ENCODE measurements at regions of chr17 and their contacts with region 1.

Region 1: GRCh38 chr17:19520641-19521040 is 13.0 kb upstream of the SLC47A1 start:
- DNase-seq: no peak
- H3K4me3 ChIP-seq: no peak overlapping the region
- H3K27ac ChIP-seq: no peak overlapping the region
- H3K4me1 ChIP-seq: no peaks in the 10 kb centered on the region
- H3K27me3 ChIP-seq: no peaks in the 10 kb centered on the region
- CTCF ChIP-seq: no peak

Region 2: DNA sequence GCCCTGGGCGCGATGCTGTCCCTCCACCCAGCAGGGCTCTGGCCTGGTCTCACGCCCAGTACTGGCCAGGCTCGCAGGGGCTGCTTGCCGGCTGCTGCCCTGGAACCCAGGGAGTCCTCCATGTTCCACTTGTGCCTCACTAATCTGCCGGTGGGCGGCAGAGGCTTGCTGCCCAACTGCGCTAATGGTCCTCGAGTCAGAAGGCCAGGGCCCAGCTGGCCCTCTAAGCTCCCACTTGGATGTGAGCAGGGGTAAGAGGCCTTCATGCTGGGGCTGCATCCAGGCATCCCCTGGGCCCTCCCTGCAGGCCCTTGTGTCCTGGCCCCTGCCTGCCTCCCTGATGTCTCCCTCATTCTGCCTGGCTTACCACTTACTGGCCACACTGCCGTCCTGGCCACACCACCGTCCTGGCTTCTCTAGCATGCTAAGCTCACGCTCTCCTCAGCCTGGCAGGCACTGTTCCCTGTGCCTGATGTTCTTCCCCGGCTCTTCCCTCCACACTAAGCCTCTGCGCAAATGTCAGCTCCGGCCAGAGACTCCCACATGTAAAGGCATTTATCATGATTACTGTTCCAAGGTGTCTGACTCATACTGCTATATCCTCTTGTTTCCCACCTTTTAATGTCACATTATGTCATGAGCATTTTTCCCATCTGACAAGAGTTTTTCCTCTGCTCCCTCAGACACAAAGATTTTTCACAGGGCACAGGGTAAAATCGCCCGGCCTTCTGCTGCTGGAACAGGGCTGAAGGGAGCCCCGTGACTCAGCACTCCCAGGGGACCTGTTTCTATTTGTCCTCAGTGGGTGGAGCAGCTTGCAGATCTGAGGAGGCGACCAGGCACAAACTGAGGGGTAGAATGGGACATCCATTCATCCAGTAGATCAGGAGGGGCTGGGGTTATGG is 174.0 kb before region 1 on chr17:
- CTCF ChIA-PET with region 1: no interaction called
- POLR2A ChIA-PET with region 1: no interaction called
- intact Hi-C with region 1: no loop called
- DNase-seq: peak; percentile 53 to 73
- H3K4me3 ChIP-seq: no peak overlapping the region
- H3K27ac ChIP-seq: peak overlapping the region; percentile 57
- H3K4me1 ChIP-seq: peaks cover 27% of the 10 kb centered on the region
- H3K27me3 ChIP-seq: no peaks in the 10 kb centered on the region
- CTCF ChIP-seq: no peak

Region 3: DNA sequence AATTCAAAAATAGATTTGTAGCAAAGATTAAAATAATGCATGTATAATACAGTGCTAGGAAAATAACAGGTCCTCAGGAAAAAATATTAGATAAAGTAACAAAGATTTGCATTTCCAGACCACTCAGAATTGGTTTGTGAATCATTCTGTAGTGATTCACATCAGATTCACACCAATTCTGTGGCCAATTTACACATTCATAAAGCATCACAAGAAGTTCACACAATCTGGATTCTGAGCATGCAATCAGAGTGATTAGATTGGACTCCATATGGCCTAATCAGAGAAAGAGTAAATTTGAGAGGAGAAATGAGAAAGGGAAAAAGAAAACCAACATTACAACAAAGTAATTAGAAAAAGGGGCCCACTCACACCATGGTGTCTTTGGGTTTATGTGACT is 23.0 kb before region 1 on chr17:
- CTCF ChIA-PET with region 1: no interaction called
- POLR2A ChIA-PET with region 1: no interaction called
- intact Hi-C with region 1: no loop called
- DNase-seq: no peak
- H3K4me3 ChIP-seq: no peak overlapping the region
- H3K27ac ChIP-seq: no peak overlapping the region
- H3K4me1 ChIP-seq: no peaks in the 10 kb centered on the region
- H3K27me3 ChIP-seq: no peaks in the 10 kb centered on the region
- CTCF ChIP-seq: no peak

Region 4: DNA sequence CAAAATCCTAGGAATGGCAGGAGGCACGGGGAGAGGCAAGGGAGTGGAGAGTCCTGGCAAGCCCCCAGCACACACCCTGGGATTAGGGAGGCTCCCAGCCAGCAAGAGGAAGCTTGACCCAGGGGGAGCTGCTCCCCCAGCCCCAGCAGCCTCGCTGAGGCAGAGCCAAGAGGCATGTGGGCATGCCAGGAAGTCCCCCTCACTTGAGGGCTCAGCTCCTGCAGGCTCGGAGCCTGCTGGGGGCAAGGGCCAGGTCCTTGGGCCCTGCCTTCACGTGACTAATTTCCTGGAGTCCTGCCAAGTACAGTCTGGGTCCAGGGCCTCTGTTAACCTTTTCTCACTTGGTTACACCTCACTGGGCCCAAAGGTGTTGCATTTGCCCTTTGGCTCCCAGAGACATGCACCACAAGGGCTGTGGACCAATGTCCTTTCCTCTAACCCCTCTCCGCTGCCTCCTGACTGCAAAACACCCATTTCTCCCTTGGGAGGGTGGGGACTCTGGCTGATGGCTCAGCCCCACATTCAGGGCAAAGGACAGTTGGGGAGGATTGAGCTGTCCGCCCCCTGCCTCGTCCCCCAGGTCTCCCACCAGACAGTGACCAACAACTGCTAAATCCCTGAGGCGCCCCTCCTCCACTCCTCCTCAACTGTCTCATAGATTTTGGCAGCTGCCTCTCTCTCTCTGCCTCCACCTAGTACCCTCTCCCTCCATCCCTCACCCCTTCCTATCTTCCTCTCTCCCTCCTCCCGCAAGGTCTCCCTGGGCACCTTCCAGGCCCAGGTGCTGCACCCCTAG is 200.2 kb after region 1 on chr17:
- CTCF ChIA-PET with region 1: no interaction called
- POLR2A ChIA-PET with region 1: no interaction called
- intact Hi-C with region 1: no loop called
- DNase-seq: peak in 1 of 2 experiments; percentile 70
- H3K4me3 ChIP-seq: no peak overlapping the region
- H3K27ac ChIP-seq: peak overlapping the region; percentile 29
- H3K4me1 ChIP-seq: peaks cover 95% of the 10 kb centered on the region
- H3K27me3 ChIP-seq: no peaks in the 10 kb centered on the region
- CTCF ChIP-seq: no peak

Region 5: GRCh38 chr17:19955099-19955498 is 434.5 kb after region 1 on chr17:
- CTCF ChIA-PET with region 1: interaction called, 21 read pairs
- POLR2A ChIA-PET with region 1: no interaction called
- intact Hi-C with region 1: no loop called
- DNase-seq: no peak
- H3K4me3 ChIP-seq: no peak overlapping the region
- H3K27ac ChIP-seq: no peak overlapping the region
- H3K4me1 ChIP-seq: peaks cover 24% of the 10 kb centered on the region
- H3K27me3 ChIP-seq: no peaks in the 10 kb centered on the region
- CTCF ChIP-seq: no peak

Region 6: DNA sequence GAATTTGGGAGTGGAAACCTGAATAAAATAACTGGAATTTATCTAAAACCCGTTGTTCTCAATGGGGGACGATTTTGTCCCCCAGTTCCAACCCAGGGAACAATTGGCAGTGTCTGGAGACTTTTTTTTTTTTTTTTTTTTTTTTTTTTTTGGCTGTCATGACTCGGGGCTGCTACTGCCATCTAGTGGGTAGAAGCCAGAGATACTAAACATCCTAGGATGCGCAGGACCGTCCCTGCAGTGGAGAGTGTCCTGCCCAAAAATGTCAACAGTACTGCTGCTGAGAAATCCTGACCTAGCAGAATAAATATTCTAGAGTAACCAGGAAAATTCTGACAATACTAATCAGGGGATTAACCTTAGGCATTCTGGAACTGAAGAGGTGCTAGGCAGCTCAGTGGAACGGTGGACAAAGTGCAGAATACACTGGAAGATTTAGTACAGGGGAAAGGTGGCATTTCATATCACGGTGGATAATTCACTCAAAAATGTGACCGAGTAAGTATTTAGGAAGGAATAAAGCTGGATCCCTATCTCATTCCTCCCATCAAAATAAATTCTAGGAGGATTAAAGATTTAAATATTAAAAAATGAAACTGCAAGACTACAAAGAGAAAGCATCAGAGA is 596.2 kb after region 1 on chr17:
- CTCF ChIA-PET with region 1: no interaction called
- POLR2A ChIA-PET with region 1: no interaction called
- intact Hi-C with region 1: no loop called
- DNase-seq: peak; percentile 52 to 55
- H3K4me3 ChIP-seq: no peak overlapping the region
- H3K27ac ChIP-seq: no peak overlapping the region
- H3K4me1 ChIP-seq: no peaks in the 10 kb centered on the region
- H3K27me3 ChIP-seq: no peaks in the 10 kb centered on the region
- CTCF ChIP-seq: peak; percentile 80